GM12878 (cell line): ENCODE measurements at regions of chr1 and their contacts with region 1.

Region 1: DNA sequence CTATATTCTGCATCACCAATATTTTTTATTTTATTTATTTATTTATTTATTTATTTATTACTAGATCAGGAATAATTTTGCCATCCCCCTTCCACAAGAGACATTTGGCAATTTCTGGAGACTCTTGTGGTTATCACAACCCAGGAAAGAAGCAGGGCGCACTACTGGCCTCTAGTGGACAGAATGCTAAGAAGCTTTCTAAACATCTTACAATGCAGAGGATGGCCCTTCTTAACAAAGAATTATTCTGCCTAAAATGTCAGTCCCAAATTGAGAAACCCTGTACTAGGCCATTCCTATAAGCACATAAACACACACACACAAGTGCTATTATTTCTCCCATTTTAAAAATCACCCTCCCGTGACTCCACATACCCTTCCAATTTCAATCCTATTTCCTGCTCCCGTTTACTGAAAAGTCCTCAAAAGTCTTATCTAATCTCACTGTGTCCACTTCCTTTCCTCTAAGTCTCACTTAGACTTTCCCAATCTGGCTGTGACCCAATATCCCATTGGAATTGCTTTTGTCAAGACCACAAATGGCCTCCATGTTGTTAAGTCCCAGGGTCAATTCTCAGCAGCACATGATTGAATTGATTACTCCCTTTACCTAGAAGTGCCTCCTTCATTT is 43.7 kb upstream of the RNF11 start:
- DNase-seq: no peak
- ATAC-seq: peak; percentile 78
- H3K4me3 ChIP-seq: no peak overlapping the region
- H3K27ac ChIP-seq: no peak overlapping the region
- H3K4me1 ChIP-seq: no peaks in the 10 kb centered on the region
- H3K27me3 ChIP-seq: no peaks in the 10 kb centered on the region
- CTCF ChIP-seq: peak; percentile 74 to 90 (median 80)
- EP300 ChIP-seq: no peak
- POLR2A ChIP-seq: no peak
- RAD21 ChIP-seq: peak; percentile 89

Region 2: GRCh38 chr1:50368179-50369012 is 823.9 kb before region 1 on chr1:
- CTCF ChIA-PET with region 1: interaction called, 3 read pairs
- POLR2A ChIA-PET with region 1: no interaction called
- RAD21 ChIA-PET with region 1: no interaction called
- SMC1A ChIA-PET with region 1: no interaction called
- in situ Hi-C with region 1: no loop called
- intact Hi-C with region 1: loop called (anchors 10 kb)
- DNase-seq: no peak
- ATAC-seq: peak; percentile 86
- H3K4me3 ChIP-seq: no peak overlapping the region
- H3K27ac ChIP-seq: no peak overlapping the region
- H3K4me1 ChIP-seq: no peaks in the 10 kb centered on the region
- H3K27me3 ChIP-seq: no peaks in the 10 kb centered on the region
- CTCF ChIP-seq: peak; percentile 59 to 75 (median 70)
- EP300 ChIP-seq: no peak
- POLR2A ChIP-seq: no peak
- RAD21 ChIP-seq: peak; percentile 91

Region 3: GRCh38 chr1:50724626-50725286 is 467.6 kb before region 1 on chr1:
- CTCF ChIA-PET with region 1: no interaction called
- POLR2A ChIA-PET with region 1: no interaction called
- RAD21 ChIA-PET with region 1: no interaction called
- SMC1A ChIA-PET with region 1: no interaction called
- in situ Hi-C with region 1: no loop called
- intact Hi-C with region 1: no loop called
- DNase-seq: peak; percentile 62
- ATAC-seq: peak; percentile 93
- H3K4me3 ChIP-seq: no peak overlapping the region
- H3K27ac ChIP-seq: peak overlapping the region; percentile 48
- H3K4me1 ChIP-seq: peaks cover 20% of the 10 kb centered on the region
- H3K27me3 ChIP-seq: no peaks in the 10 kb centered on the region
- CTCF ChIP-seq: no peak
- EP300 ChIP-seq: no peak
- POLR2A ChIP-seq: no peak
- RAD21 ChIP-seq: no peak

Region 4: GRCh38 chr1:50873458-50874187 is 318.7 kb before region 1 on chr1:
- CTCF ChIA-PET with region 1: interaction called, 220 read pairs
- POLR2A ChIA-PET with region 1: interaction called, 4 read pairs
- RAD21 ChIA-PET with region 1: interaction called, 53 read pairs
- SMC1A ChIA-PET with region 1: interaction called, 52 read pairs
- in situ Hi-C with region 1: loop called (anchors 5 kb)
- intact Hi-C with region 1: loop called (anchors 1 kb)
- DNase-seq: peak; percentile 76
- ATAC-seq: peak; percentile 99
- H3K4me3 ChIP-seq: no peak overlapping the region
- H3K27ac ChIP-seq: peak overlapping the region; percentile 29; the same call in 1 of the 2 replicates
- H3K4me1 ChIP-seq: peaks cover 9% of the 10 kb centered on the region
- H3K27me3 ChIP-seq: no peaks in the 10 kb centered on the region
- CTCF ChIP-seq: peak; percentile 62 to 90 (median 62)
- EP300 ChIP-seq: no peak
- POLR2A ChIP-seq: no peak
- RAD21 ChIP-seq: peak; percentile 73

Region 5: DNA sequence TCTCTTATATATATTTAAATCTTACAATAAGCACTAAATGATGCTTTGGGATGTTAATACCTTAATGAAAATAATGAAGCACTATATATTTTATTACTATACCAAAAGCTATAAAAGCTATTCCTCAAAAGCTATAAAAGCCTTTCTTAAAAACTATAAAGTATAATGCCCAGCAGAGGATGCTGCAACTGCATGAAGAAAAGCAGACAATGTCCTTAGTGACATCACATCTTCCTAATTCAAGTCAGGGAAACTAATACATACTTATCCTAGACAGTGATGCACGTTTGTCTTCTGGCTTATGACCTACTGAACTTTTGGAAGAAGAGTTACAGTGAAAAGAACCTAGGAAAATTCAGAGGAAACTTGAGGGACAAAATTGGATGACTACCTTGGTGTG is 103.8 kb before region 1 on chr1:
- CTCF ChIA-PET with region 1: interaction called, 4 read pairs
- POLR2A ChIA-PET with region 1: no interaction called
- RAD21 ChIA-PET with region 1: no interaction called
- SMC1A ChIA-PET with region 1: interaction called, 4 read pairs
- in situ Hi-C with region 1: no loop called
- intact Hi-C with region 1: loop called (anchors 2 kb)
- DNase-seq: no peak
- ATAC-seq: no peak
- H3K4me3 ChIP-seq: no peak overlapping the region
- H3K27ac ChIP-seq: no peak overlapping the region
- H3K4me1 ChIP-seq: no peaks in the 10 kb centered on the region
- H3K27me3 ChIP-seq: peaks cover 0 to 2% of the 10 kb centered on the region in 2 experiments; a peak in 2 of 4 replicates
- CTCF ChIP-seq: peak in 2 of 3 experiments; percentile 21 to 47; a peak in 2 of 6 replicates
- EP300 ChIP-seq: no peak
- POLR2A ChIP-seq: no peak
- RAD21 ChIP-seq: peak; percentile 66

Region 6: GRCh38 chr1:51214615-51215131 is 22.3 kb after region 1 on chr1:
- CTCF ChIA-PET with region 1: interaction called, 48 read pairs
- POLR2A ChIA-PET with region 1: no interaction called
- RAD21 ChIA-PET with region 1: interaction called, 4 read pairs
- SMC1A ChIA-PET with region 1: interaction called, 6 read pairs
- in situ Hi-C with region 1: no loop called
- intact Hi-C with region 1: no loop called
- DNase-seq: no peak
- ATAC-seq: peak; percentile 79
- H3K4me3 ChIP-seq: no peak overlapping the region
- H3K27ac ChIP-seq: no peak overlapping the region; the same call in 1 of the 2 replicates
- H3K4me1 ChIP-seq: peaks cover 11% of the 10 kb centered on the region
- H3K27me3 ChIP-seq: no peaks in the 10 kb centered on the region
- CTCF ChIP-seq: no peak
- EP300 ChIP-seq: no peak
- POLR2A ChIP-seq: no peak
- RAD21 ChIP-seq: no peak

Region 7: GRCh38 chr1:51296383-51297357 is 104.3 kb after region 1 on chr1:
- CTCF ChIA-PET with region 1: interaction called, 93 read pairs
- POLR2A ChIA-PET with region 1: no interaction called
- RAD21 ChIA-PET with region 1: interaction called, 44 read pairs
- SMC1A ChIA-PET with region 1: interaction called, 9 read pairs
- in situ Hi-C with region 1: no loop called
- intact Hi-C with region 1: loop called (anchors 2 kb)
- DNase-seq: peak; percentile 51
- ATAC-seq: peak; percentile 81
- H3K4me3 ChIP-seq: peak overlapping the region; percentile 62; the same call in 1 of the 2 replicates
- H3K27ac ChIP-seq: peak overlapping the region; percentile 23; the same call in 1 of the 2 replicates
- H3K4me1 ChIP-seq: peaks cover 32% of the 10 kb centered on the region
- H3K27me3 ChIP-seq: no peaks in the 10 kb centered on the region; a peak in 1 of 4 replicates
- CTCF ChIP-seq: peak; percentile 92 to 99 (median 97)
- EP300 ChIP-seq: 0 out of 4 replicates have a peak, but pooled peaks of 1 of the 2 experiments have one; percentile 16
- POLR2A ChIP-seq: no peak; the same call in 1 of the 2 replicates
- RAD21 ChIP-seq: peak; percentile 97

Region 8: GRCh38 chr1:51341876-51342496 is 149.7 kb after region 1 on chr1:
- CTCF ChIA-PET with region 1: no interaction called
- POLR2A ChIA-PET with region 1: no interaction called
- RAD21 ChIA-PET with region 1: no interaction called
- SMC1A ChIA-PET with region 1: no interaction called
- in situ Hi-C with region 1: no loop called
- intact Hi-C with region 1: no loop called
- DNase-seq: peak; percentile 11
- ATAC-seq: peak; percentile 69
- H3K4me3 ChIP-seq: no peak overlapping the region
- H3K27ac ChIP-seq: no peak overlapping the region
- H3K4me1 ChIP-seq: peaks cover 18% of the 10 kb centered on the region
- H3K27me3 ChIP-seq: peaks cover 0 to 5% of the 10 kb centered on the region in 2 experiments; a peak in 3 of 4 replicates
- CTCF ChIP-seq: peak; percentile 23 to 42 (median 38); a peak in 5 of 6 replicates
- EP300 ChIP-seq: no peak
- POLR2A ChIP-seq: no peak
- RAD21 ChIP-seq: peak; percentile 56

Region 9: GRCh38 chr1:51535006-51535592 is 342.8 kb after region 1 on chr1:
- CTCF ChIA-PET with region 1: interaction called, 12 read pairs
- POLR2A ChIA-PET with region 1: no interaction called
- RAD21 ChIA-PET with region 1: no interaction called
- SMC1A ChIA-PET with region 1: interaction called, 8 read pairs
- in situ Hi-C with region 1: no loop called
- intact Hi-C with region 1: no loop called
- DNase-seq: peak; percentile 54
- ATAC-seq: peak; percentile 72
- H3K4me3 ChIP-seq: no peak overlapping the region
- H3K27ac ChIP-seq: peak overlapping the region; percentile 27; the same call in 1 of the 2 replicates
- H3K4me1 ChIP-seq: peaks cover 11% of the 10 kb centered on the region
- H3K27me3 ChIP-seq: no peaks in the 10 kb centered on the region
- CTCF ChIP-seq: peak; percentile 70 to 85 (median 81)
- EP300 ChIP-seq: no peak
- POLR2A ChIP-seq: no peak
- RAD21 ChIP-seq: peak; percentile 93